ENCODE measurements at regions of chr7 and their contacts with region 1.

Region 1: DNA sequence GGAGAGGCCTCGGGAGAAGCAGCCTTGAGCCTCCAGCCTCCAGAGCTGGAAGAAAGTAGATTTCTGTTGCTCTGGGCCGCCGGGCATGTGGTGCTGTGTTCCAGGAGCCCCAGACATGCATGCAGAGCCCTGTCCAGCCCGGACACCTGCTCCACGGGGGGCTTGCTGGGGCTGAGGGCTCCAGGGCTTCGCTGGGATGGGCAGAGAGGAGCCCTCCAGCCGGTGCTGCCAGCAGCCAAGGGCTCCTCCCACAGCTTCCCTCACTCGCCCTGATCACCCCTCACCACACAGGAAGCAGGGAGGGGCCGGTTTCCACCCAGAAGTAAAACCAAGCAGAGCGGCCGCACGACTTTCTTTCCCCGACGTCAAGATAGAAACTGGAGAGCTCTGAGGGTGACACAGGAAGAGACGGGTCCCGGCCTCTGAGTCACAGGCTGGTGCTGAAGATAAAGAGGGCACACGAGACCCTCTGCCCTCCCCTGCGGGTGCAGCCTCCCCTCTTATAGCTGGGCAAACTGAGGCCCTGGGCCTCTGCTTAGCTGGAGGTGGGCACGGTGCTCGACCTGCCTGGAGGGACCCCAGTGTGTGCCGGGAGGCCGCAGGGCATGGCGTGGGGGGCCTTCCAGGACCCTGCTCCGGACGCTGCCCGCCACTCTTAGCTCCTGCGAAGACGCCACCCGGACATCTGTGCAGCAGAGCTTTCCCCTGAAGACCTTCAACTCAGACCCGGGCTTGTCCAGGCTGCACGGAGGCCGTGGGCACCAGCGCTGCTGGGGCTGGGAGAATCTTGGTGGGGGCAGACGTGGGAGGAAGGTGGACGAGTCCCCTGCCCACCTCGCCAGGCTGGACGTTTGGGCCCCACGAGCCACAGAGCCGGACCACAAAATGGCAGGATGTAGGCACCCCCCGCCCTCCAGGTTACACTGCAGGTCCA is 31.1 kb downstream of the ADAP1 start:
- DNase-seq: peak; percentile 80 to 97 (median 91)
- ATAC-seq: peak; percentile 92
- H3K4me3 ChIP-seq: peak overlapping the region; percentile 77
- H3K4me3 Mint-ChIP-seq: peak overlapping the region; percentile 90
- H3K27ac ChIP-seq: peak overlapping the region; percentile 89 to 91
- H3K27ac Mint-ChIP-seq: peak overlapping the region; percentile 92
- H3K4me1 ChIP-seq: peaks cover 60% of the 10 kb centered on the region
- H3K4me1 Mint-ChIP-seq: peaks cover 30% of the 10 kb centered on the region
- H3K27me3 ChIP-seq: no peaks in the 10 kb centered on the region
- H3K27me3 Mint-ChIP-seq: no peaks in the 10 kb centered on the region
- CTCF ChIP-seq: no peak

Region 2: GRCh38 chr7:909358-910329 is 13.7 kb before region 1 on chr7:
- CTCF ChIA-PET with region 1: interaction called, 8 read pairs
- POLR2A ChIA-PET with region 1: interaction called, 27 read pairs
- intact Hi-C with region 1: loop called (anchors 1 to 2 kb)
- DNase-seq: peak in 5 of 14 experiments; percentile 29 to 77 (median 52)
- ATAC-seq: peak; percentile 27
- H3K4me3 ChIP-seq: no peak overlapping the region
- H3K4me3 Mint-ChIP-seq: peak overlapping the region; percentile 81
- H3K27ac ChIP-seq: no peak overlapping the region
- H3K27ac Mint-ChIP-seq: peak overlapping the region; percentile 76
- H3K4me1 ChIP-seq: peaks cover 30% of the 10 kb centered on the region
- H3K4me1 Mint-ChIP-seq: peaks cover 11% of the 10 kb centered on the region
- H3K27me3 ChIP-seq: no peaks in the 10 kb centered on the region
- H3K27me3 Mint-ChIP-seq: no peaks in the 10 kb centered on the region
- CTCF ChIP-seq: peak; percentile 40

Region 3: DNA sequence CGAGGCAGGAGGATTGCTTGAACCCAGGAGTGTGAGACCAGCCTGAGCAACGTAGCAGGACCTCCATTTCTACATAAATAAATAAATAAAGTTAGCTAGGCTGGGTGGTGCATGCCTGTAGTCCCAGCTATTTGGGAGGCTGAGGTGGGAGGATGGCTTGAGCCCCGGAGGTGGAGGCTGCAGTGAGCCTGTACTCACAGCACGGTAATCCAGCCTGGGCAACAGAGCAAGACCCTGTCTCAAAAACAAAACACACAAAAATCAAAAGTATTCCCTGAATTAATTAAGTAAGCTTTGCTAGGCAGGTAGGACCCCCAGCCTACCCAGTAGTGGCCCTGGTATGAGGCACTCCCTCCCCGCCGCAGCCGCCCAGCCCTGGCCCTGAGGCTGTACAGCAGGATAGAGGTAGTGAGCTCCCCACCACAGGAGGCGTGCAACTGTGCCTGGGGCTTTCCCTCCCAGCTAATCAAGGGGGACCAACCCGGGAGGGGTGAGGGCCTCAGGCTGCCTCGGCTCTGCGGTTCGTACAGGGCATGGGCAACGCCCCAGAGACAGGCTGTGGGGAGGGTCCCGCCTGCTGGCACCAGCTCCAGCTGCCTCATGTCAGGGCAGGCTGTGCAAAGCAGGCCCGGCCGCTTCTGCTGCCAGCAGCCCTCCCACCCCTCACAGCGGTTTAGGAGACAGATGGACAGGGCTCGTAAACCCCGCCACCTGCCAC is 58.6 kb after region 1 on chr7:
- CTCF ChIA-PET with region 1: no interaction called
- POLR2A ChIA-PET with region 1: no interaction called
- intact Hi-C with region 1: no loop called
- DNase-seq: no peak
- ATAC-seq: no peak
- H3K4me3 ChIP-seq: no peak overlapping the region
- H3K4me3 Mint-ChIP-seq: no peak overlapping the region
- H3K27ac ChIP-seq: no peak overlapping the region
- H3K27ac Mint-ChIP-seq: no peak overlapping the region
- H3K4me1 ChIP-seq: no peaks in the 10 kb centered on the region
- H3K4me1 Mint-ChIP-seq: no peaks in the 10 kb centered on the region
- H3K27me3 ChIP-seq: peaks cover 0 to 7% of the 10 kb centered on the region in 2 experiments
- H3K27me3 Mint-ChIP-seq: peaks cover 5% of the 10 kb centered on the region
- CTCF ChIP-seq: no peak

Region 4: GRCh38 chr7:1081931-1082401 is 158.6 kb after region 1 on chr7:
- CTCF ChIA-PET with region 1: no interaction called
- POLR2A ChIA-PET with region 1: no interaction called
- intact Hi-C with region 1: no loop called
- DNase-seq: no peak
- ATAC-seq: no peak
- H3K4me3 ChIP-seq: no peak overlapping the region
- H3K4me3 Mint-ChIP-seq: no peak overlapping the region
- H3K27ac ChIP-seq: no peak overlapping the region
- H3K27ac Mint-ChIP-seq: no peak overlapping the region
- H3K4me1 ChIP-seq: peaks cover 6% of the 10 kb centered on the region
- H3K4me1 Mint-ChIP-seq: peaks cover 5% of the 10 kb centered on the region
- H3K27me3 ChIP-seq: no peaks in the 10 kb centered on the region
- H3K27me3 Mint-ChIP-seq: no peaks in the 10 kb centered on the region
- CTCF ChIP-seq: no peak

Measured in CD4-positive, alpha-beta T cell (primary cell).